ENCODE measurements at regions of chr5 and their contacts with region 1.

Region 1: GRCh38 chr5:96702503-96703383 is 40.6 kb downstream of the CAST start:
- DNase-seq: peak; percentile 98
- H3K4me3 ChIP-seq: peak overlapping the region; percentile 54 to 75 (median 66)
- H3K27ac ChIP-seq: peak overlapping the region; percentile 83 to 93 (median 92)
- H3K4me1 ChIP-seq: peaks cover 30 to 56% (median 33%) of the 10 kb centered on the region in 4 donors
- H3K27me3 ChIP-seq: no peaks in the 10 kb centered on the region
- CTCF ChIP-seq: no peak
- EP300 ChIP-seq: no peak
- POLR2A ChIP-seq: peak; percentile 73

Region 2: GRCh38 chr5:96651948-96652753 is 50.6 kb before region 1 on chr5:
- intact Hi-C with region 1: no loop called
- DNase-seq: no peak
- H3K4me3 ChIP-seq: no peak overlapping the region
- H3K27ac ChIP-seq: no peak overlapping the region
- H3K4me1 ChIP-seq: no peaks in the 10 kb centered on the region
- H3K27me3 ChIP-seq: no peaks in the 10 kb centered on the region
- CTCF ChIP-seq: peak in 2 of 3 experiments; percentile 18 to 39
- EP300 ChIP-seq: no peak
- POLR2A ChIP-seq: no peak

Region 3: DNA sequence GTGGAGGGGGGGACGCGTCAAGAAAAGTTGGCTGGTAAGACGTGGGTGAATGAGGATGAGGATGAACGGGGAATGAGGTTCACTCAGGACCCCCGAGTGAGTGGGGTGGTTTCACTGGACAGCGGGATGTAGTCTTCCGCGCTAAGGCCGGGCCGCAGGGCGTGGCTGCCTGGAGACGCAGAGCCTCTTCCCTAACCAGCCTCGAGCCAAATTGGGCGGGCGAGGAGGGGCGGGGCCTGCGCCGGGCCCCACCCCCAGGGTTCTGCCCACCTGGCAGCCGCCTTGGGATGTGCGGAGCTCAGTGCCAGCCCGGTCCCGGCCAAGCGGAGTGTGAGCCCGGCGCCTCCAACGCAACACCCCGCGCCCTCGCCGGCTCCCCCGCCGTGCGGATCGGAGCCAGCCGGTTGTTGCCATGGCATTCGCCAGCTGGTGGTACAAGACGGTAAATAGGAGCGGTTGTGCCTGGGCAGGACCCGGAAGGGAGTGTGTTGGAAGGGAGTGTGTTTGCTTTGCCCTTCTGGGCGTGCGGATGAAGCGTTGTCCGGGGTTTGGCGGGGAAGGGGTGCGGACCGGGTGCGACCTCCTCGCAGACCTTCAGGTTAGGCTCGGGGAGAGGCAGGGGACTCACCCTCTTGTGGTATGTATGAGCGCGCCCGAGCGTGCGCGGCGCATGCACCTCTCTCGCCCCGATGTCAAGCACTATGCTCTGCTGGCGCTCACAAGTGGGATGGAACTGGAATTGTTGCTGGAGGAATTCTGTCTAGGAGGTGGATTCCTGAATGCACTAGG is 39.8 kb before region 1 on chr5:
- intact Hi-C with region 1: loop called (anchors 2 kb)
- DNase-seq: peak; percentile 98
- H3K4me3 ChIP-seq: peak overlapping the region; percentile 87 to 99 (median 95)
- H3K27ac ChIP-seq: peak overlapping the region; percentile 100
- H3K4me1 ChIP-seq: peaks cover 19 to 50% (median 38%) of the 10 kb centered on the region in 4 donors
- H3K27me3 ChIP-seq: no peaks in the 10 kb centered on the region
- CTCF ChIP-seq: no peak
- EP300 ChIP-seq: no peak
- POLR2A ChIP-seq: peak; percentile 65

Region 4: GRCh38 chr5:96756985-96757384 is 54.2 kb after region 1 on chr5:
- intact Hi-C with region 1: no loop called
- DNase-seq: no peak
- H3K4me3 ChIP-seq: no peak overlapping the region
- H3K27ac ChIP-seq: no peak overlapping the region
- H3K4me1 ChIP-seq: peaks cover 0 to 8% (median 4%) of the 10 kb centered on the region in 4 donors
- H3K27me3 ChIP-seq: no peaks in the 10 kb centered on the region
- CTCF ChIP-seq: no peak
- EP300 ChIP-seq: no peak
- POLR2A ChIP-seq: no peak

Region 5: GRCh38 chr5:96807075-96807654 is 104.4 kb after region 1 on chr5:
- intact Hi-C with region 1: no loop called
- DNase-seq: no peak
- H3K4me3 ChIP-seq: peak overlapping the region; percentile 92 to 95 (median 94)
- H3K27ac ChIP-seq: peak overlapping the region; percentile 99 to 100 (median 100)
- H3K4me1 ChIP-seq: peaks cover 7 to 38% (median 29%) of the 10 kb centered on the region in 4 donors
- H3K27me3 ChIP-seq: no peaks in the 10 kb centered on the region
- CTCF ChIP-seq: no peak
- EP300 ChIP-seq: no peak
- POLR2A ChIP-seq: peak; percentile 33